ENCODE measurements at regions of chrX and their contacts with region 1.

Region 1: GRCh38 chrX:41108463-41109203 is 23.4 kb downstream of the USP9X start:
- DNase-seq: no peak
- ATAC-seq: no peak
- H3K4me3 ChIP-seq: no peak overlapping the region
- H3K4me3 Mint-ChIP-seq: peak overlapping the region in 1 of 3 donors; percentile 61
- H3K27ac ChIP-seq: no peak overlapping the region
- H3K27ac Mint-ChIP-seq: peak overlapping the region; percentile 55 to 71
- H3K4me1 ChIP-seq: peaks cover 5 to 26% of the 10 kb centered on the region in 2 experiments
- H3K4me1 Mint-ChIP-seq: peaks cover 76 to 82% (median 78%) of the 10 kb centered on the region in 3 donors
- H3K27me3 ChIP-seq: no peaks in the 10 kb centered on the region
- H3K27me3 Mint-ChIP-seq: no peaks in the 10 kb centered on the region

Region 2: DNA sequence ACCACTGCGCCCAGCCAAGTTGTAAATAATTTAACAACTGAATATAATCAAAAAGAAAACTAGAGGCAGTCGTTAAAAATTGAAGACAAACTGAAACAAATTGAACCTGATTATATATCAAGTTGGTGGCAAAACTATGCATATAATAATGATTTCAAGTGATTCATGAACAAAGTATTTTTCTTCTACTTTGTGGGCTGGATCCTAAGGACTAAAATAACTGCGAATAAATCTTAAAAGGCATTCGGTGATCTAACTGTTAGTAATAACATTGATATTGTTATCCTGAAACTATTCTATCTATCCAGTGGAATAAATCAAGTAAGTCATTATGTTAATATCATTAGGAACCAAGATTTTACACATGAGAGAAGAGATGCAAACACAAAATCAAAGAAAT is 44.6 kb before region 1 on chrX:
- CTCF ChIA-PET with region 1: no interaction called
- POLR2A ChIA-PET with region 1: interaction called in 1 of 2 experiments, 11 read pairs
- DNase-seq: no peak
- ATAC-seq: no peak
- H3K4me3 ChIP-seq: no peak overlapping the region
- H3K4me3 Mint-ChIP-seq: no peak overlapping the region
- H3K27ac ChIP-seq: no peak overlapping the region
- H3K27ac Mint-ChIP-seq: no peak overlapping the region
- H3K4me1 ChIP-seq: no peaks in the 10 kb centered on the region
- H3K4me1 Mint-ChIP-seq: peaks cover 0 to 4% (median 3%) of the 10 kb centered on the region in 3 donors
- H3K27me3 ChIP-seq: no peaks in the 10 kb centered on the region
- H3K27me3 Mint-ChIP-seq: peaks cover 0 to 29% of the 10 kb centered on the region in 2 donors

Region 3: GRCh38 chrX:41084044-41084892 is 24.4 kb before region 1 on chrX:
- CTCF ChIA-PET with region 1: interaction called in 1 of 2 experiments, 5 read pairs
- POLR2A ChIA-PET with region 1: interaction called, 4 to 10 read pairs
- DNase-seq: peak; percentile 90 to 100 (median 94)
- ATAC-seq: peak; percentile 65 to 70 (median 68)
- H3K4me3 ChIP-seq: peak overlapping the region; percentile 88 to 89
- H3K4me3 Mint-ChIP-seq: peak overlapping the region; percentile 91 to 95 (median 93)
- H3K27ac ChIP-seq: peak overlapping the region; percentile 99
- H3K27ac Mint-ChIP-seq: peak overlapping the region; percentile 98 to 99
- H3K4me1 ChIP-seq: peaks cover 0 to 14% of the 10 kb centered on the region in 2 experiments
- H3K4me1 Mint-ChIP-seq: peaks cover 21 to 31% (median 24%) of the 10 kb centered on the region in 3 donors
- H3K27me3 ChIP-seq: no peaks in the 10 kb centered on the region
- H3K27me3 Mint-ChIP-seq: peaks cover 0 to 9% of the 10 kb centered on the region in 2 donors